Head of caudate nucleus (tissue), 42 donors: ENCODE measurements at regions of chr12 and their contacts with region 1.

Region 1: DNA sequence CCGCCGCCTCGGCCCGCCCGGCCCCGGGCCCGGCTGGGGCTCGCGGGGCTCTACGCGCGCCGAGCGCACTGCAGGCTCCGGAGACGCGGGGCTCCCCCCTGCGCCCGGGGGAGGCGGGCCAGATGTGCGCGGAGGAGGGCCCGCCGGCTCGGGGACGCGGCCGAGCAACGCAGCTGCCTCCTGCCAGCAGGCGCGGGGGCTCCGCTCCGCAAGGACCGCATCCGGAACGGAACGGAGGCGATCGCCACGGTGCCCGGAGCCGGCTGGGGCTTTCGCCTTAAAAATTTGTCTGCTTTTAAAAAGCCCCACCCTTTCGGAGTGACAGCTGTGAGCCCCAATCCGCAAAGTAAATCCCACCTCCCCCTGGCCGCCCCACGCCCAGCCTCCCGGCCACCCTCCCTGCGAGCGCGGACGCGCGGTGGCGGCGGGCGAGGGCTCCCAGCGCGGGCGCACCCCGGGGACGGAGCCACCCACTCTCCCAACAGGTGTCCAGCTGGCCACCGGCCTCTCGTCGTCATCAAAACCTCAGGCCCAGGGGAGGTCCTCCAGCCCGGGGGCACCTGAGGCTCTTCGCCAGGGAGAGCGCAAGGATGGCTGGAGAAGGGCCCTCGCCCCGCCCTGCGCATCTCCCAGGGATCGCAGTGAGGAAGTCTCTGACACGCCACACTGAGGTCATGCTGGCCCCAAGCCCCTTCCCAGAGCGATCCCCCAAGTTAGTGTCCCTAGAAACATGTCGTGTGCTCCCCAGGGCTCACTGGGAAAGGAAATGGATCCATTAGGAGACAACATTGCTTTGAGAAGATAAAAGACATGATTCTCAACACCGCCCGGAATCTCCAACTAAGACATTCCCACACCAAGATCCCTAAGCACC is at the start of gene TMEM132D:
- DNase-seq: peak in 34 of 42 donors; percentile 9 to 70 (median 44)

Region 2: DNA sequence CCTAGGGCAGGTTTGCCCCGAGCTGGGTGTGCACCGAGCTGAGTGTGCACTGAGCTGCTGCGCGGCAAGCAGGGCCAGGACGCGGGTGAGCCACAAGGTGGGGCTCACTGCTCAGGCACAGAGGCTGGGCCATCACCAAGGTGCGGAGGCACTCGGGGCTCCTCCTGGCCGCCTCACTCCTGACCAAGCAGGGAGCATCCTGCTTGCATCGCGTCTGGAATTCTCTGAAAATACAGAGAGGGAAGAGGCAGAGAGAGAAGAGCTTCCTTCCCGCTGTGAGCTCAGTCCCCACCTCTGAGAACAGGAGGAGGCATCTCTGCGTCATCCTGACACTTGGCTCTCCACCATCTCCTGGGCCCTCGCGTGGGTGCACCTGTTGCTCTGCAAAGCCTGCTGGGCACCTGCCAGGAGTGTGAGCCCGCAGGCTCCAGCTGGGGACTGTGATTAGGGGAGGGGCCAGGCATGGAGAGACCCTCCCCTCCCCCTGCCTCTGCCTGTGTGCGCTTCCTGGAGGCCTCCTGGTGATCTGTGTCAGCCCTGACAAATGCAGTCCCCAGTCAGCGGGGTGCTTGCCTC is 934.6 kb before region 1 on chr12:
- intact Hi-C with region 1: loop called (anchors 10 kb)
- DNase-seq: peak; percentile 33 to 90 (median 70)